ENCODE measurements at regions of chr13 and their contacts with region 1.

Region 1: GRCh38 chr13:97221989-97222700 is at the start of gene MBNL2:
- DNase-seq: peak in 1 of 2 donors; percentile 99
- H3K4me3 ChIP-seq: peak within 1 kb of the TSS; percentile 56 to 68
- H3K27ac ChIP-seq: peak within 1 kb of the TSS; percentile 95
- H3K4me1 ChIP-seq: peaks cover 39% of the 10 kb centered on the region
- H3K27me3 ChIP-seq: no peaks in the 10 kb centered on the region
- CTCF ChIP-seq: no peak
- POLR2A ChIP-seq: peak in 1 of 2 donors; percentile 81
- total RNA-seq, gene MBNL2: 63.1 TPM

Region 2: GRCh38 chr13:97116754-97117153 is 105.4 kb before region 1 on chr13:
- intact Hi-C with region 1: loop called (anchors 5 kb)
- DNase-seq: no peak
- H3K4me3 ChIP-seq: no peak overlapping the region
- H3K27ac ChIP-seq: peak overlapping the region; percentile 81
- H3K4me1 ChIP-seq: peaks cover 26% of the 10 kb centered on the region
- H3K27me3 ChIP-seq: no peaks in the 10 kb centered on the region
- CTCF ChIP-seq: no peak
- POLR2A ChIP-seq: no peak

Region 3: GRCh38 chr13:97133959-97134358 is 88.2 kb before region 1 on chr13:
- intact Hi-C with region 1: no loop called
- DNase-seq: no peak
- H3K4me3 ChIP-seq: no peak overlapping the region
- H3K27ac ChIP-seq: no peak overlapping the region
- H3K4me1 ChIP-seq: no peaks in the 10 kb centered on the region
- H3K27me3 ChIP-seq: no peaks in the 10 kb centered on the region
- CTCF ChIP-seq: no peak
- POLR2A ChIP-seq: no peak

Region 4: GRCh38 chr13:97344265-97345175 is 122.4 kb after region 1 on chr13:
- intact Hi-C with region 1: loop called (anchors 10 kb)
- DNase-seq: no peak
- H3K4me3 ChIP-seq: no peak overlapping the region
- H3K27ac ChIP-seq: peak overlapping the region; percentile 25
- H3K4me1 ChIP-seq: peaks cover 51% of the 10 kb centered on the region
- H3K27me3 ChIP-seq: no peaks in the 10 kb centered on the region
- CTCF ChIP-seq: peak; percentile 37 to 65 (median 61)
- POLR2A ChIP-seq: no peak

Measured in vagina (tissue), 2 donors.